BJ (cell line): ENCODE measurements at regions of chr22 and their contacts with region 1.

Region 1: DNA sequence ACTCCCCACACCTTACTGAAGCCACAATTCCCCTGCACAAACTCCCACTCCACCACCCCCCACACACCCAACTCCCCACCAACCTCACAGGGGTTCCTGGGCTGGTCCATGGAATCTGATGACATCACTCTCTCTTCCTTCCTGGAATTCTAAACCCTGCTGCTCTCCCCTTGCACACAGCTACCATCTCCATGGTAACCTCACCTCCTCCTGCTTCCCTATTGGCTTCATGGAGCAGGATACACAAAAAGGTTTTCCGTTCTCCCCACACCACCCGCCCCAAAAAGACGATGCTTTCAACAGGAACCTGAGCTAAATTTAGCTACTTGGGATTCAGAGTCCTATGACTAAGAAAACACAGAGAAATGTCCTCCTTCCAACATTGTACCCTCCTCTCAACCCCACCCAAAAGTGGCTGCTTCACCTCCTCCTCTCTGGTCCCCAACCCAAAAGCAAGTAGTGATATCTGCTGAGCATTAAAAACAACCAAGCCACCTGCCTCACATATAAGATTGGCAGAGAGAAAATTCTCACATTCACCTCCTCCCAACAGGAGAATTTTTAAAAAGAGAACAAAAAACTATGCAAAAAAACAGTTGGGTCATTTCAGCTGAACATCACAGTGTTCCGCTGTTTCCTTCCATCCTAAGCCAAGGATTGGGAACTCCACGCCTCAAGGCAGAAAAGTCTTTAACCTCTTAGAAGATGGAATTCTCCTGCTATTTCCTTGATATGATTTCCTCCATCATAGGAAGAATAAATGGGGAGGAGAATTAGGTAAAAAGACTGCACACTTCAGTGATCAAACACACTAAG is 66.9 kb downstream of the RBFOX2 start:
- DNase-seq: no peak
- H3K4me3 ChIP-seq: no peak overlapping the region
- H3K27me3 ChIP-seq: no peaks in the 10 kb centered on the region
- CTCF ChIP-seq: no peak

Region 2: DNA sequence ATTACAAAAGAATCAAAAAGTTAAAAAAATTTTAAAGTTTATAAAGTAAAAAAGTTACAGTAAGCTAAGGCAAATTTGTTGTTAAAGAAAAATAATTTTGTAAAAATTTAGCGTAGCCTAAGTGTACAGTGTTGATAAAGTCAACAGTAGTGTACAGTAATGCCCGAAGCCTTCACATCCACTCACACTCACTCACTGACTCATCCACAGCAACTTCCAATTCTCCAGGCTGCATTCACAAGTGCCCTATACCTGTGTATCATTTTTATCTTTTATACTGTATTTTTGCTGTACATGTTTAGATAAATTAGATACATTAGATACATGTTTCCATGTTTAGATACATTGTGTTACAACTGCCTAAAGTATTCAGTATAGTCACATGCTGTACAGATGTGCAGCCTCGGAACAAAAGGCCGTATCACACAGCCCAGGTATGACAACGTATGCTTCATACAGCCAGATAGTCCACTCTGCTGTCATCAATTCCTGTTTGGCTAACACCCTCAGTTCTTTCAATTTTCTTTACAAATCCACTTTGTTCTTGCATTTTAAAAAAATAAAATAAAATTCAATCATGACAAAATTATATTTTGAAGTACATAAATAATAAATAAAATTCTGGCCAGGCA is 13.8 kb before region 1 on chr22:
- CTCF ChIA-PET with region 1: interaction called, 5 read pairs
- POLR2A ChIA-PET with region 1: interaction called, 11 read pairs
- DNase-seq: no peak
- H3K4me3 ChIP-seq: no peak overlapping the region
- H3K27me3 ChIP-seq: no peaks in the 10 kb centered on the region
- CTCF ChIP-seq: no peak